ENCODE measurements at regions of chr11 and their contacts with region 1.

Region 1: GRCh38 chr11:1896923-1897322 is 5.2 kb upstream of the PRR33 start:
- DNase-seq: no peak
- ATAC-seq: no peak
- H3K4me3 ChIP-seq: no peak overlapping the region
- H3K27ac ChIP-seq: no peak overlapping the region
- H3K4me1 ChIP-seq: no peaks in the 10 kb centered on the region; a peak in 2 of 5 replicates
- H3K27me3 ChIP-seq: peaks cover 19 to 21% of the 10 kb centered on the region in 2 experiments
- CTCF ChIP-seq: no peak
- EP300 ChIP-seq: no peak
- POLR2A ChIP-seq: no peak
- RAD21 ChIP-seq: no peak

Region 2: GRCh38 chr11:1852877-1853276 is 44.0 kb before region 1 on chr11 and contains the start of gene LSP1:
- CTCF ChIA-PET with region 1: no interaction called
- POLR2A ChIA-PET with region 1: no interaction called
- in situ Hi-C with region 1: no loop called
- intact Hi-C with region 1: no loop called
- DNase-seq: no peak
- ATAC-seq: no peak
- H3K4me3 ChIP-seq: no peak within 1 kb of the TSS
- H3K27ac ChIP-seq: no peak within 1 kb of the TSS
- H3K4me1 ChIP-seq: peaks cover 0 to 21% of the 10 kb centered on the region in 2 experiments; a peak in 2 of 5 replicates
- H3K27me3 ChIP-seq: peaks cover 27 to 87% of the 10 kb centered on the region in 2 experiments; a peak in 4 of 5 replicates
- CTCF ChIP-seq: no peak
- EP300 ChIP-seq: no peak
- POLR2A ChIP-seq: no peak
- RAD21 ChIP-seq: no peak
- polyA plus RNA-seq, gene LSP1: 0.38 TPM in 1 of 2 experiments, not detected in the other

Region 3: GRCh38 chr11:1917671-1918516 is 21.0 kb after region 1 on chr11:
- CTCF ChIA-PET with region 1: no interaction called
- POLR2A ChIA-PET with region 1: interaction called, 3 read pairs
- in situ Hi-C with region 1: no loop called
- intact Hi-C with region 1: loop called (anchors 1 kb)
- DNase-seq: peak in 2 of 4 experiments; percentile 43 to 47
- ATAC-seq: peak; percentile 59
- H3K4me3 ChIP-seq: no peak overlapping the region
- H3K27ac ChIP-seq: no peak overlapping the region
- H3K4me1 ChIP-seq: peaks cover 0 to 31% of the 10 kb centered on the region in 2 experiments; a peak in 1 of 5 replicates
- H3K27me3 ChIP-seq: peaks cover 12 to 60% of the 10 kb centered on the region in 2 experiments; a peak in 4 of 5 replicates
- CTCF ChIP-seq: peak; percentile 31 to 48 (median 47); a peak in 5 of 6 replicates
- EP300 ChIP-seq: no peak
- POLR2A ChIP-seq: no peak
- RAD21 ChIP-seq: no peak

Region 4: GRCh38 chr11:1928470-1928890 is 31.6 kb after region 1 on chr11:
- CTCF ChIA-PET with region 1: no interaction called
- POLR2A ChIA-PET with region 1: no interaction called
- in situ Hi-C with region 1: no loop called
- intact Hi-C with region 1: no loop called
- DNase-seq: no peak
- ATAC-seq: no peak
- H3K4me3 ChIP-seq: no peak overlapping the region
- H3K27ac ChIP-seq: no peak overlapping the region
- H3K4me1 ChIP-seq: peaks cover 0 to 44% of the 10 kb centered on the region in 2 experiments; a peak in 2 of 5 replicates
- H3K27me3 ChIP-seq: peaks cover 32 to 82% of the 10 kb centered on the region in 2 experiments; a peak in 4 of 5 replicates
- CTCF ChIP-seq: no peak
- EP300 ChIP-seq: no peak
- POLR2A ChIP-seq: no peak
- RAD21 ChIP-seq: no peak

Region 5: DNA sequence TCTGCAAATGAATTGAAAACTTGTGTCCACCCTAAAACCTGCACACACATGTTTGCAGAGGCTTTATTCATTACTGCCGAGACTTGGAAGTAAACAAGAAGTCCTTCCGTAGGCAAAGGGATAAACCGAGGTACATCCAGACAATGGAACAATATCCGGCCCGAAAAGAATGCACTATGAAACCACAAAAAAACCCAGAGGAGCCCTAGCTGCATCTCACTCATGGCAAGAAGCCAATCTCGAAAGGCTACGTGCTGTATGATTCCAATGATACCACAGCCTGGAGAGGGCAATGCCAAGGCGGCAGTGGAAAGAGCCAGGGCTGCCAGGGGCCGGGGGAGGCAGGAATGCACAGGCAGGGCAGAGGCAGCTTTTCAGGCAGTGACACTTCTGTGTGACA is 47.1 kb after region 1 on chr11:
- CTCF ChIA-PET with region 1: no interaction called
- POLR2A ChIA-PET with region 1: interaction called, 5 read pairs
- in situ Hi-C with region 1: loop called (anchors 5 kb)
- intact Hi-C with region 1: no loop called
- DNase-seq: no peak
- ATAC-seq: no peak
- H3K4me3 ChIP-seq: no peak overlapping the region
- H3K27ac ChIP-seq: no peak overlapping the region
- H3K4me1 ChIP-seq: peaks cover 0 to 19% of the 10 kb centered on the region in 2 experiments; a peak in 3 of 5 replicates
- H3K27me3 ChIP-seq: peaks cover 0 to under 1% of the 10 kb centered on the region in 2 experiments; a peak in 1 of 5 replicates
- CTCF ChIP-seq: no peak
- EP300 ChIP-seq: no peak
- POLR2A ChIP-seq: no peak
- RAD21 ChIP-seq: no peak

Measured in K562 (cell line).